ENCODE measurements at regions of chr19 and their contacts with region 1.

Region 1: DNA sequence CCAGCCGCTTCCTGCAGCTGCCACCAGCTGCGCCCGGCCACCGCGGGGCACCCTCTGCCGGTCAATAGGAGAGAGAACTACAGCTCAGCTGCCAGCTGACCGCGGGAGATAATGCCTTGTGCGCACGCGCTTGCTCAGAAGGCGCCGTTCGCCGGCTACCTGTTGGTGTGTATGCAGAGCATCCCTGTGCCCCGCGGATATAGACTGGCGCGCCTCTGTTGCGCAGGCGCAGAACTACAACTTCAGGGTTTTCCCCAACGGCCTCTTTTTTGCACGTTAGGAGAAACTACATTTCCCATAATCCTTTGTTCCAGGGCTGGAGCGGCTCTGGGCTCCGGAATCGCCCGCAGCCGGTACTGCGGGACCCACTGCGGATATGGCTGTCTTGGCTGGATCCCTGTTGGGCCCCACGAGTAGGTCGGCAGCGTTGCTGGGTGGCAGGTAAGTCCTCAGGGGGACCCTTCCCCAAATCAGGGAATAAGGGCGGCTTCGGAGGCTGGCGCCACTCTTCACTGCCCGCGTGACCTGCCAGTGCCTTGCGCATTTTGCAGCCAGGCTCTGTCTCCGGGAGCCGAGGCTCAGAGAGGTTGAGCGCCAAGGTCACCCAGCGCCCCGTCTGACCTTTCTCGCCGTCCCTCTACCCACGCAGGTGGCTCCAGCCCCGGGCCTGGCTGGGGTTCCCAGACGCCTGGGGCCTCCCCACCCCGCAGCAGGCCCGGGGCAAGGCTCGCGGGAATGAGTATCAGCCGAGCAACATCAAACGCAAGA is at the start of gene MRPL34:
- H3K4me3 Mint-ChIP-seq: peak within 1 kb of the TSS; percentile 85
- H3K27ac Mint-ChIP-seq: peak within 1 kb of the TSS; percentile 92
- H3K4me1 Mint-ChIP-seq: peaks cover 60% of the 10 kb centered on the region
- H3K27me3 Mint-ChIP-seq: no peaks in the 10 kb centered on the region

Region 2: DNA sequence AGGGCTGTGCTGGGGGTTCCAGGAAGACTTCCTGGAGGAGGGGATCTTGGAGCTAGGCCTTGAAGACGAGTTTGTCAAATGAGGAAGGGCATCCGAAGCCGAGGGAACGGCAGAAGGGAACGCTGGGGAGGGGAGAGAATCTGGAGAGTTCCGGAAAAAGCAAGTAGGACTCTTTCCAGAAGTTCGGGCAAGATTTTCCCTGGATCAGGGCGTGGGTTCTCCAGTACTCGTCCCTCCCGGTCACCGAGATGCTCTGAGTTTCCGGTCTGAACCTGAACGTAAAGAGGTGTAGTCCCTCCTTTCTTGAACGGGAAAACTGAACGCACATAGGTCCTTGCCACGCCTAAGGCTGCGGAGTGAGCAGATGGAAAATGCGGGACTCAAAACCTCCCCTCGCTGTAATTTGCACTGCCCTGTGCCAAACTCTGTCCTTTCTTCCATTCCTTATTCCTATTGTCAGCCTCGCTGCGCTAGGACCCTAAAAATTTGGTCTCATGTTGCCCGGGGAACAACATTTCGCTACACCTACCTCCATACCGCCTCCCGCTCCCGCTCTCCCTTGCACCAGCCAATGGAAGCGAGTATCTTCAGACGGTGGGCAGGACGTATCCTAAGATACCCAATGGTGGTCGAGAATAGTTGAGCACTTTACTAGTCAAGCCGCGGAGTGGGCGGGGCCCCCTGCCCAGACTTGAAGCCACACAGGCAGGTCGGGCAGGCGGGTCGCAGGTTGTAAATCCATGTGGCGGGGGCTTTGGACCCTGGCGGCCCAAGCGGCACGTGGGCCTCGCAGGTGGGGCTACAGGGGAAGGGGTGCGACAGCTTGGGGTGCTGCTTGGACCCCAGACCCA is 31.4 kb after region 1 on chr19 and contains the start of gene GTPBP3:
- intact Hi-C with region 1: loop called (anchors 1 kb)
- H3K4me3 Mint-ChIP-seq: peak within 1 kb of the TSS; percentile 97
- H3K27ac Mint-ChIP-seq: peak within 1 kb of the TSS; percentile 99
- H3K4me1 Mint-ChIP-seq: peaks cover 65% of the 10 kb centered on the region
- H3K27me3 Mint-ChIP-seq: no peaks in the 10 kb centered on the region

Region 3: GRCh38 chr19:17582613-17583012 is 276.9 kb after region 1 on chr19:
- intact Hi-C with region 1: no loop called
- H3K4me3 Mint-ChIP-seq: no peak overlapping the region
- H3K27ac Mint-ChIP-seq: no peak overlapping the region
- H3K4me1 Mint-ChIP-seq: peaks cover 46% of the 10 kb centered on the region
- H3K27me3 Mint-ChIP-seq: no peaks in the 10 kb centered on the region

Measured in dendritic cell treated with granulocyte-macrophage colony-stimulating factor and Interleukin-4, amounts not matched to agents 40 ng/mL and 50 ng/mL, for 4 days (primary cell).